Activated T-helper 2 cell treated with anti-CD3 and anti-CD28 coated beads, Interferon-gamma antibody, Interleukin-2, Interleukin-4, amounts not matched to agents 10 μg/mL and 5 μg/mL and 100 μg/mL, durations not matched to agents 14 hours and 24 hours and 36 hours (primary cell): ENCODE measurements at regions of chr17 and their contacts with region 1.

Region 1: DNA sequence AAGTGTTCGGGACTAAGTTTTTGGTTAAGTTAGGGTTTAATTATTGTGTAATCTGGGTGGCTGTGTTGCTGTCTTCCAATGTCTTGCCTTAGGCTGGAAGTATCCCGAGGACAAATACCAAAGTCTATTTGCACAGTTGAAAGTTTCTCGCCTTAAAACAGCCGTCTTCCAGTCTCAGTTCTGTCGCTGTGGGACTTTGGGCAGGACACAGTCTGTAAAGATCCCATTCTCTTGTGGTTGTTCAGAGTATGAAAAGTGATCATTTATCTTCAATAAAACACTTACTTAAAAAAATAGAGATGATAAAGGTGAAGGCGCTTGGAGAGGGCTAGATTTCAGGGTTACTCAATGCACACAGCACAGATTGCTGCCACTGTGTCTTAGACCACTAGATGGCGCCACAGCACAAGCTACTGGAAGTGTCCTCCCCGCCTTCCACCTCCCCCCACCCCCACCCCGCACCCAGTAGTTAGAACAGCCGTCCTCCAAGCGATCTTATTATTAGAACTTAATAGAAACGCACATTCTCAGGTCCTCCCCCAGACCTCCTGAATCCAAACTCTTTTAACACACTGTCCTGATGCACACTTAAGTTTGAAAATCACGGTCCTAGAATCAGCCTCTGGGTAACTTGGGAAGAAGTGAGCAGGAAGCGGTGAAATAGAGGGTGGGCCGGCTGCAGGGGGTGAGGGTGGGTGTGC is 45.9 kb downstream of the AKAP1 start:
- DNase-seq: peak; percentile 64
- H3K4me3 Mint-ChIP-seq: no peak overlapping the region
- H3K27ac Mint-ChIP-seq: no peak overlapping the region
- H3K4me1 Mint-ChIP-seq: peaks cover 5% of the 10 kb centered on the region
- H3K27me3 Mint-ChIP-seq: peaks cover 1% of the 10 kb centered on the region

Region 2: GRCh38 chr17:57097832-57098421 is 33.0 kb before region 1 on chr17:
- intact Hi-C with region 1: no loop called
- DNase-seq: no peak
- H3K4me3 Mint-ChIP-seq: no peak overlapping the region
- H3K27ac Mint-ChIP-seq: no peak overlapping the region
- H3K4me1 Mint-ChIP-seq: peaks cover 13% of the 10 kb centered on the region
- H3K27me3 Mint-ChIP-seq: no peaks in the 10 kb centered on the region

Region 3: DNA sequence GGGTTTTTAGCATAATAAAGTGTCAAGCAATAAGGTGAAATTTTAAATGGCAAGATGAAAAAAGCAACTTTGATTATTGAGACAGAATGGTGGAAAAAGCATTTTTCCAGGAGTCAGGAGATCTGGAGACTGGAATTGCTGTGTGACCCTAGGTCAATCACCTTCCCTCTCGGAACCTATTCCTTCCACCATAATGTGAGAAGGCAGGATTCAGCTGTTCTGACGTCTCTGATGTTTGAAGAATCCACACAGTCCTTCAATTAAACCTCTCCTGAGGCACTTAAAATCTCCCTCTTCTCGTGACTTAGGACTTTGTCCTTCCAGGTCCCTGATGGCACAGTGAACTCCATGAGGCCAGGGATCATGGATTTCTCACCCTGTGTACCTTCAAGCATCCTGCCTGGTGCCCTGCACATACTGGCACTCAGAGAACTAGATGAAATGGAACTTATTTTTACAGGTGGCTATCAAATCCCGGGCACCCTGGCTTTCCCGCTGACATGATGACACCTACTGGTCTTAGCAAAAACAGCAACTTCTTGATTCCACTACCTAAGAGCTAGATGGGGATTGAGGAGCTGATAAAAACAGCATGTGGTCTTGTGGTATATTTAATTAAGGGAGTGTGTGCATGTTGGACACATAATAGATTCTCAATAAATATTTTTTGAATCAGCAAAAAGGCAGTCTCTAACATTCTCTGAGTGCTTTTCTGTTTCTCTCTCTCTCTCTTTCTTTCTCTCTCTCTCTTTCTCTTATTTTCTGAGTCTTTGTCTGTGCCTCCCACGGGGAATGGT is 616.5 kb after region 1 on chr17:
- intact Hi-C with region 1: loop called (anchors 2 kb)
- DNase-seq: peak; percentile 10
- H3K4me3 Mint-ChIP-seq: no peak overlapping the region
- H3K27ac Mint-ChIP-seq: no peak overlapping the region
- H3K4me1 Mint-ChIP-seq: peaks cover 7% of the 10 kb centered on the region
- H3K27me3 Mint-ChIP-seq: peaks cover 13% of the 10 kb centered on the region

Region 4: GRCh38 chr17:57833179-57833939 is 702.4 kb after region 1 on chr17:
- intact Hi-C with region 1: loop called (anchors 1 kb)
- DNase-seq: peak; percentile 47
- H3K4me3 Mint-ChIP-seq: no peak overlapping the region
- H3K27ac Mint-ChIP-seq: no peak overlapping the region
- H3K4me1 Mint-ChIP-seq: peaks cover 9% of the 10 kb centered on the region
- H3K27me3 Mint-ChIP-seq: no peaks in the 10 kb centered on the region